Naive thymus-derived CD4-positive, alpha-beta T cell (primary cell): ENCODE measurements at regions of chr21 and their contacts with region 1.

Region 1: DNA sequence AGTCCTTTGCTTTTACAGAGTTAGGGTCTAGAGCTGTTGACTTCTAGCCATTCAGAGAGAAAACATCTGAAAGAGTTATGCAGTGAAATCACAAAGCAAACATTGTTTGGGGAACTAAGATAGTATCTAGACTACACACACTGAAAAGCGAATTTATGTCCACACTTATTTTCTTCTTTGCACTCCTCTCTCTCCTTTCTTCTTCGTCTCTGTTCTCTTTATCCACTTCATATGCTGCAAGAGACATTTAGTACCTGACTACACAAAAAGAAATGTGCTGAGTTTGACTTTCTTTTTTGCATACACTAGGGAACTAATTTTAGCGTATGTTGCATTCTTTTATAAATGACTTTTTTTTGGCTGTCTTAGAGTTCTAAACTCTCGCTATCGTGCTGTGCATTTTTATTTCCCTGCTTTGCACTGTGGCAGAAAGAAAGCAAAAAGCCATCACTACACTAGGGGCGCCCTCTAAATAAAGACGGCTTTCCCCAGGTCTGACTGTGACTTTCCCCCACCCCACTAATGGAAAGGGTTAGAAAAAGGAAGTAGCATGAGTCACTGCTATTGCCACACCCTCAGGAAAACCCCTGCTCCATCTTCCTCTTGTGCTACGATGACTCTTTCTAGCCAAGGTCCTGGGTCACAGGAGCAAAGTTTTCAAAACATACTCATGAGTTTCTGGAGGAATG is 65.7 kb downstream of the MAP3K7CL start:
- DNase-seq: peak in 8 of 9 donors; percentile 13 to 71 (median 44)
- ATAC-seq: peak; percentile 99
- H3K4me3 ChIP-seq: peak overlapping the region; percentile 30
- H3K4me3 Mint-ChIP-seq: peak overlapping the region; percentile 63 to 92 (median 82)
- H3K27ac ChIP-seq: no peak overlapping the region
- H3K27ac Mint-ChIP-seq: peak overlapping the region; percentile 2 to 88 (median 84)
- H3K4me1 ChIP-seq: peaks cover 0 to 2% of the 10 kb centered on the region in 2 donors
- H3K4me1 Mint-ChIP-seq: peaks cover 12 to 40% (median 24%) of the 10 kb centered on the region in 7 donors
- H3K27me3 ChIP-seq: no peaks in the 10 kb centered on the region
- H3K27me3 Mint-ChIP-seq: no peaks in the 10 kb centered on the region

Region 2: DNA sequence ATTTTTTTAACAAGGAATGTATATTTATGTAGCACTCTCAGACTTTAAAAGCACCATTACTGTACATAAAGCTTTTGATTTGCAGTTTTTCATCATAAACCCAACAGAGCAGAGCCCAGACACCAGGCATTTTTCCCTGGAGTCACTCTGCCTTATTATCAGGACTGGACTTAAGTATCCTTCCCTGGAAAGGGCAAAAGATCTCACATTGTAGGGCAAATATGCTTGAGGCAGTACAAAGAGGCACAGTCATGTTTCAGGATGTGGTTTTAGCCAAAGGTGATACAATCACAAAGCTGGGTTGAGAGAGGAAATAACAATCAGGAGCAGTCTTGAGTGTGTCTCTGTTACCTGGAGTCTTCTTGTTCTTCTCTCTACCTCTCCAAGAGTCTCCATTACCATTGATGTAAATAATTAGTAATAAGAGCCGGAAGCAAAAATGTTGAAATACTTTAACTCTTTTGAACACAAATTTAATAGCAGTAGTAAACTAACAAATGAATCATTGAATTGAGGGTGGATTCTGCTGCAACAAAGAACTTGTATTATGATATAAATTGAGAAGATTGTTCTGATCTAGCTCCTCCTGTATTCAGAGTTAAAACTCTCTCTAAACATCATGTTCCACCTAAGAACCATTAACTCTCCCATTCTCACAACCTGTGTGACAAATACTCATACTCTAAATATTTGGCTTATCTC is 364.0 kb before region 1 on chr21:
- CTCF ChIA-PET with region 1: no interaction called
- POLR2A ChIA-PET with region 1: no interaction called
- intact Hi-C with region 1: loop called in 1 of 2 experiments (anchors 10 kb)
- DNase-seq: peak in 6 of 9 donors; percentile 29 to 64 (median 52)
- ATAC-seq: peak; percentile 91
- H3K4me3 ChIP-seq: peak overlapping the region; percentile 21
- H3K4me3 Mint-ChIP-seq: peak overlapping the region; percentile 12 to 75 (median 68)
- H3K27ac ChIP-seq: no peak overlapping the region
- H3K27ac Mint-ChIP-seq: peak overlapping the region; percentile 2 to 97 (median 68)
- H3K4me1 ChIP-seq: peaks cover 52 to 56% of the 10 kb centered on the region in 2 donors
- H3K4me1 Mint-ChIP-seq: peaks cover 46 to 82% (median 76%) of the 10 kb centered on the region in 7 donors
- H3K27me3 ChIP-seq: no peaks in the 10 kb centered on the region
- H3K27me3 Mint-ChIP-seq: no peaks in the 10 kb centered on the region

Region 3: DNA sequence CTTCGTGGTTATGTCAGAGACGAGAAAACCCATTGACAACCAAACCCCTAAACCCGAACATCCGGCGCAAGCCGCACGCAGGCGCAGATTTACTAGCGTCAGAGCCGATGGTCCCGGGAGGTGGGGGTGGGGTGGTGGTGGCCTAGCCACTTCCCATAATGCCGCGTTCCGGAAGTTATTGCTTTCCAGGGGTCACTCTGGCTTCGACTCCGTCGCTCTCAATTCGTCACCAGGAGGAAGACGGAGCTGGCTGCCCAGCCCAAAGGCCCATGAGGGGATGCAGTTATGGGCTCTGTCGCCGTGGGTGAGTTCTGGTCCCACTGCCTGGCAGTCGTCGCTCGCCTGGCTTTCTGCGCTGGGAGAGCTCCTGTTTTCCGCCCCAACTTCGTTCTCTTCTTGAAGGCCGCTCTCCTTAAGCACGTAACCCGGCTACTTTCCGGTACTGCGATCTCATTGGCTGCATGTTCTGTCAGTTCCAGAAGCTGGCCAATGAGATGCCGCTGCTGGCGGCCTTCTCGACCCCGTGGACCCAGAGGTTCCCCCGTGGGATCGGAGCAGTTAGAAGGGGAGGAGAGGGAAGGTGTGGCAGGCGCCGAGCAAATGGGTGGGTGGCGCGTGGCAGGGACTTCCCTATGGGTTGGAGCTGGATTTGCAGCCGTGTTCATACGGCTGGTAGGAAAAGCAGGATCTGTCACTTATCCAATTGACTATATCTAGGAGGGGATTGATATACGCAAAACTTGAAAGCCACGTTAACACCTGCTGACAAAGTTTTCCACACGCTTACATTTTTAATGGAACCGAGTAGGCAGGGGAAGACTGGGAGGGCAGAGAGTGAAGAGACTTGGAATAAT is 171.4 kb before region 1 on chr21 and contains the start of gene USP16:
- CTCF ChIA-PET with region 1: no interaction called
- POLR2A ChIA-PET with region 1: no interaction called
- intact Hi-C with region 1: loop called in 1 of 2 experiments (anchors 2 kb)
- DNase-seq: peak; percentile 86 to 97 (median 96)
- ATAC-seq: peak; percentile 94
- H3K4me3 ChIP-seq: peak within 1 kb of the TSS; percentile 88
- H3K4me3 Mint-ChIP-seq: peak within 1 kb of the TSS; percentile 88 to 99 (median 96)
- H3K27ac ChIP-seq: peak within 1 kb of the TSS; percentile 93
- H3K27ac Mint-ChIP-seq: peak within 1 kb of the TSS; percentile 97 to 100 (median 99)
- H3K4me1 ChIP-seq: peaks cover 35 to 41% of the 10 kb centered on the region in 2 donors
- H3K4me1 Mint-ChIP-seq: peaks cover 21 to 79% (median 53%) of the 10 kb centered on the region in 7 donors
- H3K27me3 ChIP-seq: no peaks in the 10 kb centered on the region
- H3K27me3 Mint-ChIP-seq: no peaks in the 10 kb centered on the region
- total RNA-seq, gene USP16: 40.9 to 84.3 (median 62.7) TPM

Region 4: DNA sequence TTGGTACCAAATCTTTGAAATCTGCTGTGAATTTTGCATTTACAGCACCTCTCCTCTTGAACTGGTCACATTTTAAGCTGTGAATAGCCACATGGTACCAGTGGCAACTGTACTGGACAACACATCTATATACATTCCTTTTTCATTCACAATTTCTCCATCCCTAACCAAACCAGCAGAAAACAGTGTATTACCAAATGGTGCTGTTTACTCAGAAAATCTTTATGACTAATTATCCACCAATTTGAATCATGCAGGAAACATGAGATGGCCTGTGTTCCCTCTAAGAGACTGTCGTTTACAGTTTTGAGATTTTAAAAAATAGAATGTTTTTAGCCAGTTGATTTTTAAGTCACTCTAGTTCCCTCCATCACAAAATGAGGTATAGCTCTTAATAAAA is 105.1 kb before region 1 on chr21:
- CTCF ChIA-PET with region 1: no interaction called
- POLR2A ChIA-PET with region 1: no interaction called
- intact Hi-C with region 1: loop called in 1 of 2 experiments (anchors 2 kb)
- DNase-seq: no peak
- ATAC-seq: peak; percentile 9
- H3K4me3 ChIP-seq: no peak overlapping the region
- H3K4me3 Mint-ChIP-seq: no peak overlapping the region
- H3K27ac ChIP-seq: no peak overlapping the region
- H3K27ac Mint-ChIP-seq: no peak overlapping the region
- H3K4me1 ChIP-seq: no peaks in the 10 kb centered on the region
- H3K4me1 Mint-ChIP-seq: peaks cover 0 to 9% (median 0%) of the 10 kb centered on the region in 7 donors
- H3K27me3 ChIP-seq: no peaks in the 10 kb centered on the region
- H3K27me3 Mint-ChIP-seq: peaks cover 0 to 3% (median 0%) of the 10 kb centered on the region in 5 donors

Region 5: GRCh38 chr21:29232601-29233546 is 36.7 kb after region 1 on chr21:
- CTCF ChIA-PET with region 1: no interaction called
- POLR2A ChIA-PET with region 1: no interaction called
- intact Hi-C with region 1: loop called in 1 of 2 experiments (anchors 5 kb)
- DNase-seq: peak in 2 of 9 donors; percentile 3 to 8
- ATAC-seq: peak; percentile 24
- H3K4me3 ChIP-seq: no peak overlapping the region
- H3K4me3 Mint-ChIP-seq: peak overlapping the region in 1 of 10 donors; percentile 40
- H3K27ac ChIP-seq: no peak overlapping the region
- H3K27ac Mint-ChIP-seq: peak overlapping the region in 1 of 9 donors; percentile 45
- H3K4me1 ChIP-seq: no peaks in the 10 kb centered on the region
- H3K4me1 Mint-ChIP-seq: peaks cover 5 to 40% (median 6%) of the 10 kb centered on the region in 7 donors
- H3K27me3 ChIP-seq: no peaks in the 10 kb centered on the region
- H3K27me3 Mint-ChIP-seq: peaks cover 0 to 14% (median 0%) of the 10 kb centered on the region in 5 donors

Region 6: DNA sequence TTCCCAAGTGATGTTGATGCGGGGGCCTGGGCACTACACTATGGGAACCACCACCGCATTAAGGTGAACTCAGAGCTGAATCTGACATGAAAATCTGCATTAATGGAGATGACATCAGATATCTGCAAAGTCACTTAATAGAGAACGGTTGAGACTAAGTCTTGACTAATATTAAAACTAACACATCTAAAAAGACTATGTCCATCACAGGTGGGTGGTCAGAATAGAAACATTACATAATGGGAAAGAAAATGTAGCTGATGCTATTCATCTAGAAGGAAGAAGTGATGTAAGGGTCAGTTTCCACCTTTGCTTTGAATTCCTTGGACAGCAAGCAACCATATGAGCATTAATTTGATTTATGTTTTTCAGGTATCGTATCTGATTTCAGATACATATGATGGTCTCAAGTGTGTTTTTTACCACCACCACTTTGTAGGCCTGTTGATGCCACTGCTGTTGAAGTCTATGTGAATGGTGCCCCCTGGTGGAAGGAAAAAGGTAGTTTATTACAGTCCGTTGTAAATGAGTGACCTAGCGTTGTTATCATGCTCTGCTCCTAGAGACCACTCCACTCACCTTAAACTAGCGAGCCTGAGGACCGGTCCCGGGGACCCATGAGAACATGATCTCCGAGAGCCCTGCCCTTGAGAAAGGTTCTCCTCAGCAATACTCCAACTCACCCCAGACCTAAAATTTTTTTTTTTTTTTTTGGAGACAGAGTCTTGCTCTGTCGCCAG is 176.1 kb after region 1 on chr21:
- CTCF ChIA-PET with region 1: no interaction called
- POLR2A ChIA-PET with region 1: no interaction called
- intact Hi-C with region 1: loop called in 1 of 2 experiments (anchors 1 kb)
- DNase-seq: peak in 8 of 9 donors; percentile 41 to 70 (median 61)
- ATAC-seq: peak; percentile 94
- H3K4me3 ChIP-seq: no peak overlapping the region
- H3K4me3 Mint-ChIP-seq: no peak overlapping the region
- H3K27ac ChIP-seq: no peak overlapping the region
- H3K27ac Mint-ChIP-seq: peak overlapping the region in 3 of 9 donors; percentile 9 to 60 (median 30)
- H3K4me1 ChIP-seq: peaks cover 9 to 10% of the 10 kb centered on the region in 2 donors
- H3K4me1 Mint-ChIP-seq: peaks cover 5 to 15% (median 10%) of the 10 kb centered on the region in 7 donors
- H3K27me3 ChIP-seq: no peaks in the 10 kb centered on the region
- H3K27me3 Mint-ChIP-seq: no peaks in the 10 kb centered on the region